Posterior vena cava (tissue), 2 donors: ENCODE measurements at regions of chrX and their contacts with region 1.

Region 1: DNA sequence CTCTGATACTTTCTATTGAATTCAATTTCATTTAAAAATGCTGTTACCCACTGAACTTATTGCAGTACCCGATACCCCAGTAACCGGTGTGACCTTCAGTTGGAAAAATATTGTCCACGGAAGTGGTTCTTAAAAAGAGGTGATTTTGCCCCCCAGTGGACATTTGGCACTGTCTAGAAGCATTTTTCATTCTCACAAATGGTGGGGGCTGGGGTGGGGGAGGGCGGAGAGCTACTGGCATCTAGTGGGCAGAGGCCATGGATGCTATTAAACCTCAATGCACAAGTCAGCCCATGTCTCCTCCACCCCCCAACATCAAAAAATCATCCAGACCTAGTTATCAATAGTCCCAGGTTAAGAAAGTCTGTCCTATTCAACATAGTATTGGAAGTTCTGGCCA is 19.6 kb upstream of the CHM start:
- DNase-seq: no peak

Region 2: DNA sequence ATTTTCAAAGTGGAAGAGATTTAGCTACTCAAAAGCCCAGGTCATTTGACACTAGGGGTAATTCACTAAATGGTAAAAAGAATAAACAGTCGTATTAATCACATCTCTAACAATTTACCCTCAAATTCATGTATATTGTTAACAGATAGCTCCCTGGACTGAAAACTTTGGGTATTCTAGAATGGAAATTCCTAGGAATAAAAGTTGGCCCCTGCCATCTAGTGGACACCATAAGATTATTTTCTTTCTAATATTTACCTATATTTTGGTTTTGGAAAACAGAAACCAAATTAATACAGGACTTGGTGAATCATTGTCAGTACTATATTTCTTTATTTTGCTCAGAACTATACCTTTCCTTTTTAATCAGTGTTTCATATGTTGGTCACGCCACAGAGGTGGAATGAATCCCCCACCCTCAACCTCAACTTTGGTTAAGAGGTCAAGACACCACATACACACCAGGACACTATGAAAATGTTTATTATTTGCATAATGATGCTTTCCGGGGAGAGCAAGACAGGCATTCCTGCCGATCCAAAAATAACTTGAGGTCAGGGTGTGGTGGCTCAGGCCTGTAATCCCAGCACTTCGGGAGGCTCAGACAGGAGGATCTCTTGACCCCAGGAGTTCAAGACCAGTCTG is 1159.6 kb before region 1 on chrX:
- intact Hi-C with region 1: no loop called
- DNase-seq: no peak

Region 3: DNA sequence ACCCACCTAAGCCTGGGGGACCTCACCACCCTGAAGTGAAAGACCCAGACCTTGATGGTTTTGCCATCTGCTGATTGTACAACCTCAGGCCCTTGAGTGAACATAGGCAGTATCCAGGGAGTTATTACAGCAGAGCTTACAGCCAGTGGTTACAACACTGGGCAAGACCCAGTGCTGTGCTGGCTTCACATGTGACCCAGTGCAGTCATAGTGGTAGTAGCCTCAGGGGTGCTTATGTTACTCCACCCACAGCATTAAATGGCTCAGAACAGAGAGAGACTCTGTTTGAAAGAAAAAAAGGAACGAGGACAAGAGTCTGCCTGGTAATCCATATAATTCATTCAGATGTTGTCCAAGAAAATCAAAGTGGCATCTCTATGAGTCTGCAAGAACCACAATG is 36.1 kb after region 1 on chrX:
- intact Hi-C with region 1: loop called in 1 of 2 experiments (anchors 2 kb)
- DNase-seq: no peak